ENCODE measurements at regions of chr19 and their contacts with region 1.

Region 1: DNA sequence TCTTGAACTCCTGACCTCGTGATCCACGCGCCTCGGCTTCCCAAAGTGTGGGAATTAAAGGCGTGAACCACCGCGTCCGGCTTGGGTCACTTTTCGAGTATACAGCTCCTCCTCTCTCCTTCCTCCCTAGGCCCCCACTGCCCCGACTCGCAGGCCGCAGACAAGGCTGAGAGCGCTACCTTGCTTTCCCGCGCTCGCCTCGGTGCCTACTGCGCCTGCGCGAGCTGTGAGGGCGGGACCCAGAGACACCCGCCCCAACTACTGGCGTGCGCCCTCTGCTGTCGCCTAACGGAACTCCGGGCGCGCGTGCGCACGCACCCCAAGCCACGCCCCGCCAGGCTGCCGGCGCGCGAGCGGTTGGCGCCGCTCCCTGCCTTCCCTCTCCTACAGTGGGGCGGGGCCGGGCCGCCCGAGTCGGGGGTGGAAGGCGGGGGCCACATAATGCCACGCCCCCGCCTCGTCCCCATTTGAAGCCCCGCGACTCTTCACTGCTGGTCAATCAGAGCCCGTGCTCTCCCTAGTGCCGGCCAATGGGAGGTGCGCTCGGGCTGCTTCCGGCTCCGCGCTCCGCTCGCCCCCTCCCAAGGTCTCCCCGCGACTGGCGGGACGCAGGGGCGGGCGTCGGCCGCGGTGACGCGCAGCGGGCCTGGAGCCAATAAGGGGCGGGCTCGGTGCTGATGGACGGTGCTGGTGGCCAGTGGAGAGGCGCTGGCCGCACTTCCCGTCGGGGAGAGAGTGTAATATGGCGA is at the start of gene RAB8A:
- DNase-seq: peak; percentile 99
- H3K4me3 Mint-ChIP-seq: peak within 1 kb of the TSS; percentile 98
- H3K27ac Mint-ChIP-seq: peak within 1 kb of the TSS; percentile 95
- H3K4me1 Mint-ChIP-seq: peaks cover 27% of the 10 kb centered on the region
- H3K27me3 Mint-ChIP-seq: peaks cover 1% of the 10 kb centered on the region
- total RNA-seq, gene RAB8A: 235 and 248 TPM in 2 replicates

Region 2: DNA sequence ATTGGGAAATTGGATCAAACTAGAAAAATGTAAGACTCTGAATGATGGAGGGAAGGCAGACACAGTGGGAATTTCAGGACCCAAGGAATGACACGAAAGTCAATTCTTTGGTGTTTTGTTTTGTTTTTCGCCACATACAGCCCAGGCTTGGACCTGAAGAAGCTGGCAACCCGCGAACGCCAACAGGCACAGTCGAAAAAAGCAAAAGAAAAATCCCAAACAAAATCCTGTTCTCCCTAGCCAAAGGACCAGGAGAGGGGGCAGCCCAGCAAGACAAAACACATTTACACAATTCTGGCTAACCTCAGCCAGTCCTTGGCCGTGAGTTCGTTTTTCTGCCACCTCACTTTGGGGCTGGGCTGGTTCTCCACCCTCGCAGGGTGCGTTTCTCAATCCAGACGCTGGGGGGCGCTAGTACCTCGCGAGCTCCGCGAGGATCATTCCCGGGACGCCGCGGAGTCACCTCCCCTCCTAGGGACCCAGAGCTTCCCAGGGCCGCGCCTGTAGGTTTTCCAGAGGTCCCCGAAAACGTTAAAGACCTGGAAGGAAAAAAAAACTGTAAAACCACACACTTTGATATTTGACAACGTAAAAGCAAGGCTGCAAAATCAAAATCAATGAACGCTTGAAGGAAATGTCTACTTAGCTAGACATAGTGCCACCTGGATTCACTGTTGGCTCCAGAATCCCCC is 69.9 kb before region 1 on chr19:
- intact Hi-C with region 1: loop called (anchors 1 kb)
- DNase-seq: peak; percentile 64
- H3K4me3 Mint-ChIP-seq: peak overlapping the region; percentile 45
- H3K27ac Mint-ChIP-seq: no peak overlapping the region
- H3K4me1 Mint-ChIP-seq: peaks cover 5% of the 10 kb centered on the region
- H3K27me3 Mint-ChIP-seq: peaks cover 4% of the 10 kb centered on the region

Region 3: GRCh38 chr19:16052353-16052752 is 59.0 kb before region 1 on chr19:
- intact Hi-C with region 1: no loop called
- DNase-seq: no peak
- H3K4me3 Mint-ChIP-seq: no peak overlapping the region
- H3K27ac Mint-ChIP-seq: no peak overlapping the region
- H3K4me1 Mint-ChIP-seq: no peaks in the 10 kb centered on the region
- H3K27me3 Mint-ChIP-seq: peaks cover 19% of the 10 kb centered on the region

Region 4: DNA sequence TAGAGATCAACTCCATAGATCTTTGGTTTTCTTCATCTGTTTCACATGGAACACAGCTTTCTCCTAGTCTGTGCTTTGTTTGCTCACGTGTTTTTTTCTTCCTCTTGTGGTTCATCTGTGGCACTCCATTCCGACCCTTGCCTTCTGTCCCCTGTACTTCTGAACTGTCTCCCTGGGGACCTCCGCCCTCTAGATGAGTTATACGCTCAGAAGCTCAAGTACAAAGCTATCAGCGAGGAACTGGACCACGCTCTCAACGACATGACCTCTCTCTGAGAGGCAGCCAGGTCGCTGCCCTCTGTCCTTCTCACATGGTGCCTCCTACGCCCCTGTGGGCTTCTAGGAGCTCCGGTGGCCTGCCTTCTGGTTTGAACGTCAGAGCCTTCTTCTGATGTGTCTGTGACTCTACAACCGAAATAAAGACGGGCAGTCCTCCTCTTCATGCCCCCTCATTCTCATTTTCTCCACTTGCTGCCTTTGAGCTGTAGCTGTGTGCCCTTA is 16.2 kb before region 1 on chr19:
- intact Hi-C with region 1: loop called (anchors 2 kb)
- DNase-seq: no peak
- H3K4me3 Mint-ChIP-seq: peak overlapping the region; percentile 29
- H3K27ac Mint-ChIP-seq: peak overlapping the region; percentile 89
- H3K4me1 Mint-ChIP-seq: peaks cover 34% of the 10 kb centered on the region
- H3K27me3 Mint-ChIP-seq: no peaks in the 10 kb centered on the region

Region 5: GRCh38 chr19:16185123-16185767 is 73.9 kb after region 1 on chr19 and contains the start of gene FAM32A:
- intact Hi-C with region 1: loop called (anchors 1 kb)
- DNase-seq: peak; percentile 99
- H3K4me3 Mint-ChIP-seq: peak within 1 kb of the TSS; percentile 94
- H3K27ac Mint-ChIP-seq: peak within 1 kb of the TSS; percentile 94
- H3K4me1 Mint-ChIP-seq: peaks cover 36% of the 10 kb centered on the region
- H3K27me3 Mint-ChIP-seq: no peaks in the 10 kb centered on the region
- total RNA-seq, gene FAM32A: 71.6 and 72.8 TPM in 2 replicates

Region 6: GRCh38 chr19:16324384-16325160 is 213.2 kb after region 1 on chr19 and contains the start of gene KLF2:
- intact Hi-C with region 1: loop called (anchors 1 kb)
- DNase-seq: peak; percentile 91
- H3K4me3 Mint-ChIP-seq: peak within 1 kb of the TSS; percentile 42
- H3K27ac Mint-ChIP-seq: peak within 1 kb of the TSS; percentile 29
- H3K4me1 Mint-ChIP-seq: peaks cover 35% of the 10 kb centered on the region
- H3K27me3 Mint-ChIP-seq: peaks cover 19% of the 10 kb centered on the region
- total RNA-seq, gene KLF2: 5.7 TPM in 2 replicates

Region 7: GRCh38 chr19:16495982-16496612 is 384.8 kb after region 1 on chr19 and contains the starts of genes C19orf44 and CALR3:
- intact Hi-C with region 1: loop called (anchors 1 kb)
- DNase-seq: peak; percentile 98
- H3K4me3 Mint-ChIP-seq: peak within 1 kb of the TSS; percentile 93
- H3K27ac Mint-ChIP-seq: peak within 1 kb of the TSS; percentile 87
- H3K4me1 Mint-ChIP-seq: peaks cover 9% of the 10 kb centered on the region
- H3K27me3 Mint-ChIP-seq: no peaks in the 10 kb centered on the region
- total RNA-seq, gene C19orf44: 4.4 and 5.6 TPM in 2 replicates
- total RNA-seq, gene CALR3: not detected in 2 replicates